HepG2 (cell line): ENCODE measurements at regions of chr1 and their contacts with region 1.

Region 1: GRCh38 chr1:117121776-117122697 is 488 bp upstream of the TRIM45 start:
- DNase-seq: peak; percentile 89
- ATAC-seq: peak; percentile 99
- H3K4me3 ChIP-seq: peak overlapping the region; percentile 47 to 77 (median 71); a peak in 5 of 6 replicates
- H3K27ac ChIP-seq: peak overlapping the region; percentile 43
- H3K4me1 ChIP-seq: peaks cover 19% of the 10 kb centered on the region
- H3K27me3 ChIP-seq: no peaks in the 10 kb centered on the region; a peak in 1 of 5 replicates
- CTCF ChIP-seq: peak; percentile 88
- EP300 ChIP-seq: no peak
- POLR2A ChIP-seq: peak; percentile 38 to 61; a peak in 3 of 4 replicates
- RAD21 ChIP-seq: peak; percentile 40; the same call in 1 of the 2 replicates

Region 2: DNA sequence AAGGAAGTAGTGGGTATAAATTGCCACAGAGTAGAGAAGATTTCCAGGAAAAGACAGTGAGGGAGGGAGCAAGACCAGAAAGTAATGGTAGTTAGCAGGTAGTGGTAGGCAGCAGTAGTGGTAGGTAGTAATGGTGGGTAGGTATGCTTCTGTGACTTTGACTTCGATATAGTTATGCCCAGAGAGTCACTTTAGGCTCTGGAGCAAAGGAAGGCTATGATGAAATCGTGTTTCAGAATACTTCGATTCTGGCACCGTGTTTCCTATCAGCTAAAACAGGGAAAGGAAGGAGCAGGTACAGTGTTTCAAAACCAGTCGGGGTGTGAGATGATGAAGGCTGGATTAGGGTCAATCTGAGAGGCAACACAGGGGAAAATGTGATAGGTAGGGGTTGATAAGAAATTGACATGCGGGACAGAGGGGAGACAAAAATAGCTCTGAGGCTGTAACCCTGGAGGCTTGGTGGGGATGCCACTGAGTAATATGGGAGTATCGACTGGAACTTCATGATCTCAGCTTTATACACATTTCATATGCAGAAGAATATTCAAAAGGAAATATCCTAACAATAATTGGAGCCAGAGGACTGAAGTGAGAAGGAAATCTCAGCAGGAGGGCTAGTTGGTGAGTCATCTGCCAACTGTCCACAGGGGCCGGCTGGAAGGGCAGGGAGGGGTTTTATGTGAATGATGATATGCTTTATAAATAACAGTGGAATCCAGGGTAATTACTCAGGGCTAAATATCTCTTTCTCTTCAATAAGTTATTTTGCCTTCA is 24.7 kb after region 1 on chr1:
- CTCF ChIA-PET with region 1: no interaction called
- POLR2A ChIA-PET with region 1: no interaction called
- in situ Hi-C with region 1: no loop called
- intact Hi-C with region 1: no loop called
- DNase-seq: no peak
- ATAC-seq: no peak
- H3K4me3 ChIP-seq: no peak overlapping the region
- H3K27ac ChIP-seq: no peak overlapping the region
- H3K4me1 ChIP-seq: no peaks in the 10 kb centered on the region
- H3K27me3 ChIP-seq: no peaks in the 10 kb centered on the region; a peak in 1 of 5 replicates
- CTCF ChIP-seq: no peak
- EP300 ChIP-seq: no peak
- POLR2A ChIP-seq: no peak
- RAD21 ChIP-seq: no peak

Region 3: DNA sequence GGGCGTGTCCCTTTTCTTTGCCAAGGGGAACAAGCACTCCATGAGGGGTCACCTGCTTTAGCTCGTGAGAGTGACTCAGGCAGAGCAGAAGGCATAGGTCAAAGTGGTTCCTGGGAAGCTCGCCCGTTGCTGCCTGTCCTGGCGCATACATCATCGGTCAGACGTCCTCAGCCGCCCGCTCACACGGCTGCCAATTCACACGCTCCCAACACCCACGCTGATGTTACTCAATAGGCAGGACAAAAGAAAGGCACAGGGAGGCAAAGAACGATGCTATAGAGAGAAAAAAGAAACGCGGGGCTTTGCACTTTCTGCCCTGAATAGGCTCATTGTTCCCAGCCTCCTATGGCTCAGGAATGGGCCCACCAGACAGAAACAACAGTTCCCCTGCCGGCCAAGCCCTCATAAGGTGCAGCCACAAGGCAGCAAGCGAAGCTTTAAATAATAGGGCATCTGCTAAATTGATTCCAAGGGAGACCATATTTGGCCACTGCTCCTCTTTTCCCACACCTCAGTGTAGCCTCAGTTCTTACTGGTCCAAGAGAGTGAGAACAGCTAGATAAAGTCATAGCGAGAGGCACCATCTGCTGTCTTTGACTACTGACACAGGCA is 50.0 kb after region 1 on chr1:
- CTCF ChIA-PET with region 1: no interaction called
- POLR2A ChIA-PET with region 1: no interaction called
- in situ Hi-C with region 1: no loop called
- intact Hi-C with region 1: loop called (anchors 5 kb)
- DNase-seq: peak; percentile 67
- ATAC-seq: peak; percentile 86
- H3K4me3 ChIP-seq: no peak overlapping the region
- H3K27ac ChIP-seq: no peak overlapping the region
- H3K4me1 ChIP-seq: peaks cover 9% of the 10 kb centered on the region
- H3K27me3 ChIP-seq: no peaks in the 10 kb centered on the region; a peak in 1 of 5 replicates
- CTCF ChIP-seq: no peak
- EP300 ChIP-seq: no peak
- POLR2A ChIP-seq: no peak
- RAD21 ChIP-seq: no peak

Region 4: GRCh38 chr1:117367047-117368018 is 245.3 kb after region 1 on chr1 and contains the start of gene MAN1A2:
- CTCF ChIA-PET with region 1: no interaction called
- POLR2A ChIA-PET with region 1: no interaction called
- in situ Hi-C with region 1: no loop called
- intact Hi-C with region 1: loop called (anchors 10 kb)
- DNase-seq: peak; percentile 65
- ATAC-seq: peak; percentile 85
- H3K4me3 ChIP-seq: peak within 1 kb of the TSS; percentile 77 to 95 (median 88)
- H3K27ac ChIP-seq: peak within 1 kb of the TSS; percentile 95
- H3K4me1 ChIP-seq: peaks cover 31% of the 10 kb centered on the region
- H3K27me3 ChIP-seq: no peaks in the 10 kb centered on the region; a peak in 1 of 5 replicates
- CTCF ChIP-seq: 0 out of 2 replicates have a peak, but pooled peaks have one; percentile 10
- EP300 ChIP-seq: 0 out of 4 replicates have a peak, but pooled peaks of 1 of the 2 experiments have one; percentile 42
- POLR2A ChIP-seq: peak; percentile 60 to 80
- RAD21 ChIP-seq: no peak
- total RNA-seq, gene MAN1A2: 19.9 and 20.4 TPM in 2 replicates